Left ventricle myocardium inferior (tissue), 1 donor: ENCODE measurements at regions of chr12 and their contacts with region 1.

Region 1: GRCh38 chr12:51895501-51896041 is 7.7 kb downstream of the ANKRD33 start:
- DNase-seq: no peak
- H3K4me3 ChIP-seq: no peak overlapping the region
- H3K27ac ChIP-seq: peak overlapping the region; percentile 64
- H3K4me1 ChIP-seq: peaks cover 48% of the 10 kb centered on the region
- H3K27me3 ChIP-seq: no peaks in the 10 kb centered on the region
- CTCF ChIP-seq: no peak

Region 2: DNA sequence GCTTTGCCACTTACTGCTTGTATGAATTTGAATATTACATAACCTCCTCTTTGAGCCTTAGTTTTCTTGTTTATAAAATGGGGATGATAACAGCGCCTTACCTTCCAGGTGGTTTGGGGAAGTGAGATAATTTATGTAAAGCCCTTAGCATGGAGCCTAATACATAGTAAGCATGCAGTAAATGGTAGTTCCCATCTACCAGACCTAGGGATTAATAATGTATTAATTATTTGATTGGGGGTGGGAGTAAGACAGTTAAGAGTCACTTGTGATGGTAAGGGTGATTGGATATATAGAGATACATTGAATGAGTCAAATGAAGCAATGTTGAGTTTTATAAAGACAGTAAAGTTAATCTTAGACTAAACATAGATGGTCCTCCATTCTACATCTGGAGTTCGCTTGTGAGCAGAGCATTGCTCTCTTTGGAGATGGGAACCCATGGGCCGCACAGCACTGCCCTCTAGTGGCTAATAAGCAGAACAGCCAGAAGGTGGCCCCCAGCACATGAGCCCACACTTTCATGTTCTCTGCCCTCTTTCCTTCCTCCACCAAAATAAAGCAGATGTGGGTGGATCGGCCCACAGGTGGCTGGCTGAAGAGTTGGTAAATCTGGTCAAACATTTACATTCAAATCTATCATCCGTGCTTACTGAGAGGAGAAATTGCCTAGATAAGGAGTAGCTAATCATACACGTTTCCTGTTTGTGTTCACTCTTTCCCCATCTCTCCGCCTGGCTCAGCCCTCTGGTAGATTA is 84.7 kb after region 1 on chr12:
- intact Hi-C with region 1: loop called (anchors 2 kb)
- DNase-seq: peak; percentile 63
- H3K4me3 ChIP-seq: no peak overlapping the region
- H3K27ac ChIP-seq: no peak overlapping the region
- H3K4me1 ChIP-seq: peaks cover 8% of the 10 kb centered on the region
- H3K27me3 ChIP-seq: no peaks in the 10 kb centered on the region
- CTCF ChIP-seq: peak; percentile 99

Region 3: GRCh38 chr12:52192173-52192791 is 296.7 kb after region 1 on chr12:
- intact Hi-C with region 1: no loop called
- DNase-seq: peak; percentile 81
- H3K4me3 ChIP-seq: no peak overlapping the region
- H3K27ac ChIP-seq: peak overlapping the region; percentile 30
- H3K4me1 ChIP-seq: peaks cover 41% of the 10 kb centered on the region
- H3K27me3 ChIP-seq: no peaks in the 10 kb centered on the region
- CTCF ChIP-seq: no peak